ENCODE measurements at regions of chr20 and their contacts with region 1.

Region 1: DNA sequence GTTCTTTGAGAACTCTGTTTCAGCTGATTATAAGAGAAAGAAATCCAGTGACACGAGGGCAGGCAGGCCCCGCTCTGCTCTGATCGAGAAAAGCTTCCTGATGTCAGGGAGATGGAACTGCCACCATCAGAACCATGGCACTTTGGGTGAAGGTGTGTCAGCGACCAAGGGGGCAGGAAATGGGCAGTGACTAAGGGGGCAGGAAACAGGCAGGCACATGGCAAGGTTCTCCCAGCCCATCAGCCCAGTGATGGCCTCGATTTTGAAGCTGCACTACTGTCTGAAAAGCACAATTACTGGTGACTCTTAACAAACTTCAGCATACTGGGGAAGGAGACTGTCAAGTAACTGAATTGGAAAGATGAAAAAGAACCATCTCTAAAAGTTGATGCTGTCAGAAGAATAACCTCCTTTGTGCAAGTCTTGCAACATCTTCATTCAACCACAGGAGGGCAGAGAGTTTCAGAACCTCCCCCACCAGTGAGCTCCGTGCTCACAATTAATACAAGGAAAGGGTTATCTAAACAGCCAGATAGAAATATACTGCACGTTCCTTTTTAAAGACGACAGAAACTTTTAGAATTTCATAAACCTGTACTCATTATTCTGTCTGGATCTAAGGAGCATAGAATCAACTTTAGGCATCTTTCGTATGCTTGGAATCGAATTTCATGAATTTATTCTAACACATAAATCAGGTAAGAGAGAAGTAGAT is 39.1 kb downstream of the TMX4 start:
- DNase-seq: peak in 1 of 2 experiments; percentile 1
- H3K4me3 ChIP-seq: no peak overlapping the region
- H3K27ac ChIP-seq: no peak overlapping the region
- H3K4me1 ChIP-seq: peaks cover 0 to 11% (median 2%) of the 10 kb centered on the region in 4 experiments; a peak in 3 of 7 replicates
- H3K27me3 ChIP-seq: no peaks in the 10 kb centered on the region
- CTCF ChIP-seq: peak in 2 of 3 experiments; percentile 40 to 48; a peak in 3 of 4 replicates
- EP300 ChIP-seq: no peak
- POLR2A ChIP-seq: no peak
- RAD21 ChIP-seq: peak; percentile 36 to 52; a peak in 3 of 4 replicates

Region 2: GRCh38 chr20:7967199-7967844 is 13.2 kb before region 1 on chr20:
- CTCF ChIA-PET with region 1: interaction called, 12 read pairs
- POLR2A ChIA-PET with region 1: no interaction called
- DNase-seq: no peak
- H3K4me3 ChIP-seq: no peak overlapping the region
- H3K27ac ChIP-seq: no peak overlapping the region
- H3K4me1 ChIP-seq: no peaks in the 10 kb centered on the region
- H3K27me3 ChIP-seq: no peaks in the 10 kb centered on the region
- CTCF ChIP-seq: no peak
- EP300 ChIP-seq: no peak
- POLR2A ChIP-seq: no peak
- RAD21 ChIP-seq: no peak

Measured in H1 (cell line).